Activated CD4-positive, alpha-beta T cell treated with anti-CD3 and anti-CD28 coated beads for 36 hours (primary cell): ENCODE measurements at regions of chr16 and their contacts with region 1.

Region 1: DNA sequence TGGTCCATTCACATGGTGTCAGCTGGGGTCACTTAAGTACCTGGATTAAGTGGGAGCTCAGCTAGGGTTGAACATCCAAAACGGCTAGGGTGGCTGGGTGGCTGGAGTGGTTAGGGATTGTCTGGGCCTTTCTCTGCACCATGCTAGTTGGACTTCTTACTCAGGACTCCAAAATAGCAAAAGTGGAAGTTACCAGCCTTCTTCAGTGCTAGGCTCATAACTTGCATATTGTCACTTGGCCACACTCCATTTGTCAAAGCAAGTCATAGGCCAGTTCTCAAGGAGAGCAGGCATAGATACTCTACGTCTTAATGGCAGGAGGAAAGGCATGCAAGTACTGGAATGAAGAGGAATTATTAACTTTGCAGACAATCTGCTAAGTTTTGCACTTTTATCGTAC is 69.7 kb downstream of the ESRP2 start:
- DNase-seq: no peak
- ATAC-seq: no peak
- H3K4me3 Mint-ChIP-seq: no peak overlapping the region
- H3K27ac Mint-ChIP-seq: no peak overlapping the region
- H3K4me1 Mint-ChIP-seq: no peaks in the 10 kb centered on the region
- H3K27me3 Mint-ChIP-seq: no peaks in the 10 kb centered on the region

Region 2: GRCh38 chr16:68186877-68187276 is 20.6 kb after region 1 on chr16:
- CTCF ChIA-PET with region 1: no interaction called
- POLR2A ChIA-PET with region 1: interaction called, 10 read pairs
- intact Hi-C with region 1: no loop called
- DNase-seq: no peak
- ATAC-seq: no peak
- H3K4me3 Mint-ChIP-seq: no peak overlapping the region
- H3K27ac Mint-ChIP-seq: no peak overlapping the region
- H3K4me1 Mint-ChIP-seq: no peaks in the 10 kb centered on the region
- H3K27me3 Mint-ChIP-seq: no peaks in the 10 kb centered on the region

Region 3: DNA sequence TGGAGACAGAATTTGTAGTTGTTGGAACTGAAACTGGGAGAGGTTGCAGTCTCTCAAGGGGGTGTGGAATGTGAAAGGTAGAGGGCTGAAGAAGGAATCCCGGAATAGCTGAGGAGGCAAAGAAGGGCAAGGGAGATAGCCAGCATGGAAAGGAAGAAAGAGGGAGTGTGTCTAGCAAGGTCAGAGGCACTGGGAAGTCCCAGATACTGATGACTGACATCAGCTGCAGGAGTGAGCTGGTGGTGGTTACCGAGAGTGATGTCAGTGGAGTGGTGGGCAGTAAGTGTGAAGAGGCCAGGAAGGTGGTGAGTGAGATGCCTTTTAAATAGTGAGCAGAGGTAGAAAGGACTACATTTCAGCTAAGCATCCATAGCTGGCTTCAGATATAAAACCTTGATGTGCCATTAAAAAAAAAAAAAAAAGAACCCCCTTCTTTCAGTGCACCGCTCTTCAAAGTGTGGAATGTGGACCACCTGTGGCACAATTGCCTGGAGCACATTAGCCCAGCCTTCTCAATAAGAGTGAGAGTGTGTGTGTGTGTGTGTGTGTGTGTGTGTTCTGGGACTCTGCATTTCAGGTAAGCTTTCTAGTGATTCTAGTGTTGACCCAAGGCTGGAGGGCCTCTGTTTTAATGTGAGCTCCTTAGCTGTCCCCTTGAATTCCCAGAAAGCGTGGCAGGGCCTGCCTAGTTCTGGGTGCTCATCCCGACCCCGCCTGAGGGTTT is 153.1 kb after region 1 on chr16:
- CTCF ChIA-PET with region 1: no interaction called
- POLR2A ChIA-PET with region 1: no interaction called
- intact Hi-C with region 1: no loop called
- DNase-seq: peak; percentile 81
- ATAC-seq: peak; percentile 100
- H3K4me3 Mint-ChIP-seq: no peak overlapping the region
- H3K27ac Mint-ChIP-seq: peak overlapping the region; percentile 74
- H3K4me1 Mint-ChIP-seq: peaks cover 27% of the 10 kb centered on the region
- H3K27me3 Mint-ChIP-seq: no peaks in the 10 kb centered on the region

Region 4: GRCh38 chr16:68719993-68720489 is 553.8 kb after region 1 on chr16:
- CTCF ChIA-PET with region 1: no interaction called
- POLR2A ChIA-PET with region 1: no interaction called
- intact Hi-C with region 1: no loop called
- DNase-seq: peak; percentile 64
- ATAC-seq: peak; percentile 96
- H3K4me3 Mint-ChIP-seq: no peak overlapping the region
- H3K27ac Mint-ChIP-seq: peak overlapping the region; percentile 82
- H3K4me1 Mint-ChIP-seq: peaks cover 19% of the 10 kb centered on the region
- H3K27me3 Mint-ChIP-seq: no peaks in the 10 kb centered on the region